K562 (cell line): ENCODE measurements at regions of chr4 and their contacts with region 1.

Region 1: GRCh38 chr4:10461091-10461849 is 4.0 kb upstream of the ZNF518B start:
- DNase-seq: peak; percentile 83 to 87 (median 84)
- ATAC-seq: peak; percentile 73
- H3K4me3 ChIP-seq: peak overlapping the region; percentile 52
- H3K27ac ChIP-seq: peak overlapping the region; percentile 86
- H3K4me1 ChIP-seq: peaks cover 9 to 30% of the 10 kb centered on the region in 2 experiments; a peak in 4 of 5 replicates
- H3K27me3 ChIP-seq: no peaks in the 10 kb centered on the region
- CTCF ChIP-seq: peak; percentile 78 to 87 (median 84)
- EP300 ChIP-seq: no peak
- POLR2A ChIP-seq: peak; percentile 62; the same call in 1 of the 2 replicates
- RAD21 ChIP-seq: peak; percentile 54 to 57; a peak in 3 of 4 replicates

Region 2: DNA sequence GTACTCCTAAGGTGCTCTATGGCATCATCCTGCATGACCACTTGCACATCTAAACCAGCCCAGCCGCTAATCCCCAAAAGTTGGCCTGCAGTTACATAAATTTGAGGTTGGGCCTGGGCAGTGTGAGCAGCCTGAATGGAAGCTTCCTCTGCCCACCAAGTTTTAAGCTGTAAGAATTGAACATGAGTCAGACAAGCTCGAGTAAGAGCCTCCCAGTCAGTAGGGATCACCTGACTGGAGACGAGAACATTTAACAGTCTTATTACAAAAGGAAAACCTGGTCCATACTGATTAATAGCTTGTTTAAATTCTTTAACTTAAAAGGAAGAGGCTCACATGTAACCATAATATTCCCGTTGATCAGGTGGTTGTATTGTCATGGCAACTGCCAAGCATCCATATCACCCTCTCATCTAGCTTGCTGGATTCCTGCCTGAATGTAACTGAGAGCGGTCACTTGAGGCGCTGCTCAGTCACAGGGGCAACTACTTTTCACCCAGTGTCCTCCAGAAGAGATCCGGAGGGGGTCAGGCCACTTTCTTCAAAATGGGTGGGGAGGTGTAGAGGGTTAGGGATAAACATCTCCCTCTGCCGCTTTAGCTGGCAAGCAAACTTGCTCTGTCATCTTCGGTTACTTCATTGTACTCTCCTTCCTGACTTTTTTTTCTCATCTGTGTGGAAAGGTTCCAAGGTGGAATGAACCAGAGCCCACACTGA is 288.1 kb before region 1 on chr4:
- CTCF ChIA-PET with region 1: no interaction called
- POLR2A ChIA-PET with region 1: interaction called, 4 read pairs
- in situ Hi-C with region 1: no loop called
- intact Hi-C with region 1: loop called (anchors 5 kb)
- DNase-seq: peak; percentile 83 to 96 (median 86)
- ATAC-seq: peak; percentile 90
- H3K4me3 ChIP-seq: no peak overlapping the region; the same call in 1 of the 2 replicates
- H3K27ac ChIP-seq: peak overlapping the region; percentile 93
- H3K4me1 ChIP-seq: peaks cover 27 to 76% of the 10 kb centered on the region in 2 experiments
- H3K27me3 ChIP-seq: no peaks in the 10 kb centered on the region
- CTCF ChIP-seq: peak; percentile 90 to 97 (median 92)
- EP300 ChIP-seq: peak; percentile 95
- POLR2A ChIP-seq: no peak
- RAD21 ChIP-seq: peak; percentile 89 to 90

Region 3: GRCh38 chr4:10413177-10413576 is 48.1 kb before region 1 on chr4:
- CTCF ChIA-PET with region 1: no interaction called
- POLR2A ChIA-PET with region 1: no interaction called
- in situ Hi-C with region 1: no loop called
- intact Hi-C with region 1: loop called (anchors 5 kb)
- DNase-seq: peak in 2 of 4 experiments; percentile 26 to 29
- ATAC-seq: no peak
- H3K4me3 ChIP-seq: no peak overlapping the region
- H3K27ac ChIP-seq: no peak overlapping the region
- H3K4me1 ChIP-seq: peaks cover 3 to 4% of the 10 kb centered on the region in 2 experiments; a peak in 2 of 5 replicates
- H3K27me3 ChIP-seq: no peaks in the 10 kb centered on the region
- CTCF ChIP-seq: no peak
- EP300 ChIP-seq: no peak
- POLR2A ChIP-seq: no peak
- RAD21 ChIP-seq: no peak

Region 4: DNA sequence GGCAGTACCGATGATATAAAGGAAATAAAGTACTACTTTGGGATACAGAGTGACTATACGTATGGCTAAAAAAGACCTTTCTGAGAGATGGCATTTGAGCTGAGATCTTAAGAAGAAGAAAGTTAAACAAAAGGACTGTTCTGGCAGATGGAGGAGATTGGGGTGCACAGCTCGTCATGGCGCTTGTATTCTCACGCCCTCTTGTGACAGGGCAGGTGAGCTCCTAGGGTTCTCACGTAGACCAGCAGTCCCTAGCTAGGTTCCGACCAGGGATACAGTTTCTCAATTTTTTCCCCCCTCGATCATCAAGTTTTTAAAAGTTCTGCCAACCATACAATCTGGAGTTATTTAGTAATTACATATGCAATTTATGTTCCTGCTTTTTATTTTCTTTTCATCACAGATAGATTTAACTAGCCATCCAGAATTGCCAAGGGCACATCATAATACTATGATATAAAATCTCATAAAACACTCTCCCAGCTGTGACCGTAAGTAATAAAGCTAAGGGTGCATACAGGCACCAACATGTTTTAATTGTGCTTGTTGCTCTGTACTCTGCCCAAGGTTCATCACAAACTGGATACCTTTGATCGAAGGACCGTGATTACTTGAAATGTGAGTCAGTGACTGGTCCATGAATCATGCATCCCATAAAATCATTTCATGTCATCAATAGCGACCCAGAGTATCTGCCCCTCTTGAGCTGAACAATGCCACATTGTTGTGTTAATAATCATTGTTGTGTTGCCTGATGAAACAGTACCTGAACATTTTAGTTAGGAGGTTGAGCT is 65.4 kb after region 1 on chr4:
- CTCF ChIA-PET with region 1: no interaction called
- POLR2A ChIA-PET with region 1: no interaction called
- in situ Hi-C with region 1: loop called (anchors 10 kb)
- intact Hi-C with region 1: loop called (anchors 5 kb)
- DNase-seq: peak in 3 of 4 experiments; percentile 11 to 42 (median 38)
- ATAC-seq: peak; percentile 92
- H3K4me3 ChIP-seq: no peak overlapping the region
- H3K27ac ChIP-seq: no peak overlapping the region
- H3K4me1 ChIP-seq: no peaks in the 10 kb centered on the region; a peak in 2 of 5 replicates
- H3K27me3 ChIP-seq: peaks cover 0 to 4% of the 10 kb centered on the region in 2 experiments; a peak in 2 of 5 replicates
- CTCF ChIP-seq: peak; percentile 46 to 59 (median 51); a peak in 5 of 6 replicates
- EP300 ChIP-seq: no peak
- POLR2A ChIP-seq: no peak
- RAD21 ChIP-seq: peak; percentile 56 to 69; a peak in 3 of 4 replicates

Region 5: GRCh38 chr4:10619220-10619619 is 157.9 kb after region 1 on chr4:
- CTCF ChIA-PET with region 1: no interaction called
- POLR2A ChIA-PET with region 1: no interaction called
- in situ Hi-C with region 1: no loop called
- intact Hi-C with region 1: no loop called
- DNase-seq: peak in 1 of 4 experiments; percentile 5
- ATAC-seq: no peak
- H3K4me3 ChIP-seq: no peak overlapping the region
- H3K27ac ChIP-seq: no peak overlapping the region
- H3K4me1 ChIP-seq: no peaks in the 10 kb centered on the region
- H3K27me3 ChIP-seq: no peaks in the 10 kb centered on the region
- CTCF ChIP-seq: no peak
- EP300 ChIP-seq: no peak
- POLR2A ChIP-seq: no peak
- RAD21 ChIP-seq: no peak

Region 6: DNA sequence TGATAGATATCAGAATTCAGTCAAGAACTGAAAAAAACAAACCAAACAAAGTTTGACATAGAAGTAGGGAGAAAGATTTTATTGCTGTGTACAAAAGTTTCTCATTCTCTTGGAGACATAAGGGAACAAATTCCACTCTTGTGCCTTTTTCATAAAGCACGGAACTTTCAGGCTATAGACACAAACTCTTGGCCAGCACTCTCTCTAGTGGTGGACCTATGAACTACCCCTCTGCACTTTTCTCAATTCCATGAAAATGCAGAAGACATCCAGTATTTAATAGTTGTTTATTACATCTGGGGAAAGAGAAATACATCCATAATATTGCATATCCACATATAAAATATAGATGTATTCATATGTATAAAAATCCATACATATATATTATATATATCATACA is 1259.0 kb after region 1 on chr4:
- CTCF ChIA-PET with region 1: no interaction called
- POLR2A ChIA-PET with region 1: no interaction called
- in situ Hi-C with region 1: no loop called
- intact Hi-C with region 1: no loop called
- DNase-seq: peak in 2 of 4 experiments; percentile 9 to 10
- ATAC-seq: no peak
- H3K4me3 ChIP-seq: no peak overlapping the region
- H3K27ac ChIP-seq: no peak overlapping the region
- H3K4me1 ChIP-seq: no peaks in the 10 kb centered on the region
- H3K27me3 ChIP-seq: no peaks in the 10 kb centered on the region
- CTCF ChIP-seq: no peak
- EP300 ChIP-seq: no peak
- POLR2A ChIP-seq: no peak
- RAD21 ChIP-seq: peak in 1 of 2 experiments; percentile 13; a peak in 1 of 4 replicates